WTC11 (cell line): ENCODE measurements at regions of chr13 and their contacts with region 1.

Region 1: DNA sequence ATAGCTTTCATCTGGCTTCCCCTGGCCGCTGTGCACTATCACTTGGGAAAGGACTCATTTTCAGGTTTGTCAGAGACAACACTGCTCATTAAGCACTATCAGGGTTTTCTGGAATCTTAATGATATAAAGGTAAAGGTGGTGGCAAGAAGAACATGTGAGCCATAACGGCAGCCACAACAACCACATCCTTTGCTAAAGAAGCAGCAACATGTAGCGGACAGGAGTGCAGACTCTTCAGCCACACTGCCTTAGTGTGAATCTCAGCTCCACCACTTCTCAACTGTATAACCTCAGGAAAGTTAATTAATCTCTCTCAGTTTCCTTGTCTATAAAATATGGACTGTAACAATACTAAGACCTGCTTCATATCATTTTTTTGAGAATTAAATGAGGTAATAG is 24.1 kb upstream of the MIR17HG start:
- DNase-seq: no peak
- ATAC-seq: no peak
- H3K4me3 Mint-ChIP-seq: no peak overlapping the region
- H3K27ac Mint-ChIP-seq: no peak overlapping the region
- H3K4me1 Mint-ChIP-seq: no peaks in the 10 kb centered on the region
- H3K27me3 Mint-ChIP-seq: no peaks in the 10 kb centered on the region
- CTCF ChIP-seq: no peak

Region 2: GRCh38 chr13:91348906-91349435 is 25.6 kb after region 1 on chr13:
- CTCF ChIA-PET with region 1: no interaction called
- POLR2A ChIA-PET with region 1: interaction called, 10 read pairs
- DNase-seq: peak; percentile 91
- ATAC-seq: peak; percentile 39
- H3K4me3 Mint-ChIP-seq: peak overlapping the region; percentile 87
- H3K27ac Mint-ChIP-seq: peak overlapping the region; percentile 98
- H3K4me1 Mint-ChIP-seq: peaks cover 46% of the 10 kb centered on the region
- H3K27me3 Mint-ChIP-seq: no peaks in the 10 kb centered on the region
- CTCF ChIP-seq: peak; percentile 96

Region 3: GRCh38 chr13:91456837-91457236 is 133.5 kb after region 1 on chr13:
- CTCF ChIA-PET with region 1: no interaction called
- POLR2A ChIA-PET with region 1: no interaction called
- DNase-seq: no peak
- ATAC-seq: no peak
- H3K4me3 Mint-ChIP-seq: no peak overlapping the region
- H3K27ac Mint-ChIP-seq: no peak overlapping the region
- H3K4me1 Mint-ChIP-seq: no peaks in the 10 kb centered on the region
- H3K27me3 Mint-ChIP-seq: no peaks in the 10 kb centered on the region
- CTCF ChIP-seq: no peak

Region 4: DNA sequence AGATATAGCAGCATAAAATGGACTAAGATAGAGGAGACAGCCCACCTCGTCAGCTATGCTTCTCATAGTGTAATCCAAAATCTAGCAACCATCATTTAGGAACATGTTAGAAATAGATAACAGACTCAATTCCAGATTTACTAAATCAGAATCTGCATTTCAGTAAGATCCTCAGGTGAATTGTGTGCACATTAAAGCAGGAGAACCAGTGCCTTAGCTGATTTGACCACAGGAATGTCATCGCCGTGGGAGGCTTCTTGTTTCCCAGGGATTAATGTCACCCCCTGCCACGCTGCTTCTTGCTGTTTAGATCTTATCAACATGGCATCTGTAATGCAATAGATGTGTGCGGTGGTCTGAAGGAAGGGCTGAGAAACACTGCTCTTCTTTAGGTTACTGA is 159.1 kb after region 1 on chr13:
- CTCF ChIA-PET with region 1: no interaction called
- POLR2A ChIA-PET with region 1: no interaction called
- DNase-seq: no peak
- ATAC-seq: peak; percentile 28
- H3K4me3 Mint-ChIP-seq: no peak overlapping the region
- H3K27ac Mint-ChIP-seq: no peak overlapping the region
- H3K4me1 Mint-ChIP-seq: no peaks in the 10 kb centered on the region
- H3K27me3 Mint-ChIP-seq: no peaks in the 10 kb centered on the region
- CTCF ChIP-seq: no peak